ENCODE measurements at regions of chr2 and their contacts with region 1.

Region 1: DNA sequence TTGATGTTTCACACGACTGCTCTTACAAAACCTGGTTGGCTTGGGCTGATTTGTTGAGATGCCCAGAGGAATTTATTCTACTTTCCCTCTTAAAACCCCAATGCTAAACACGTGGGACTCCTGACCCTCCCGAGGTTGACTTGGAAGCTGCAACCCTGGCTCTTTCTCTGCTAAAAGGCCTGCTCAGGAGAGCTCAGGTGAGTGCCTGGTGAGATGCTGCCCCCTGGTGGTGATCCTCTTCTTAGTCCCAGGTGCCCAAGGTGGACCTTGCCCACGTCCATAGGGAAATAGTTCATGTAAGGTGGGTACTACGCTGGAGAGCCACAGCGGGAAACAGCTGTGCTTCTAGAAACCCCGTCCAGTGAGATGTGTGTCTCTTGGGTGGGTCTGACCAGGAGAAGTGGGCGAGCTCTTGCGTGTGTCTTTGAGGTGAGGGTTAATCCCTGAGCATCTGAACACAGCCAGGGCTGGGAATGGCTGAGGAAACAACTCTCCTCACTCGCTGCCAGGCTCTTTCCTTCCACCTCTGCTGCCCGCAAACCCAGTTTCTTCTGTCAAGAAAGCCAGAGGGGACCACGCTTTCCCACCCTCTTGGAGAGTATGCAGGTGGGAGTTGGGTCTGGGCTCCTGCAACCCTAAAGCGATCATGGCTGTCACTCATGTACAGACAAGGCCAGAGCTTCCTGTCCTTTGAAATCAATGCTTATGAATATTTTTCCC is 25.5 kb upstream of the PXDN start:
- DNase-seq: peak; percentile 53
- H3K4me3 ChIP-seq: no peak overlapping the region
- H3K27ac ChIP-seq: no peak overlapping the region
- H3K4me1 ChIP-seq: no peaks in the 10 kb centered on the region
- H3K27me3 ChIP-seq: no peaks in the 10 kb centered on the region
- CTCF ChIP-seq: peak; percentile 91 to 92

Region 2: GRCh38 chr2:950080-950966 is 819.5 kb before region 1 on chr2 and contains the start of gene SNTG2:
- CTCF ChIA-PET with region 1: no interaction called
- dilution Hi-C with region 1: no loop called
- in situ Hi-C with region 1: no loop called
- intact Hi-C with region 1: loop called (anchors 1 kb)
- DNase-seq: no peak
- H3K4me3 ChIP-seq: no peak within 1 kb of the TSS
- H3K27ac ChIP-seq: no peak within 1 kb of the TSS
- H3K4me1 ChIP-seq: no peaks in the 10 kb centered on the region
- H3K27me3 ChIP-seq: peaks cover 13% of the 10 kb centered on the region
- CTCF ChIP-seq: no peak
- total RNA-seq, gene SNTG2: not detected

Region 3: GRCh38 chr2:1591978-1592907 is 177.6 kb before region 1 on chr2:
- CTCF ChIA-PET with region 1: no interaction called
- dilution Hi-C with region 1: no loop called
- in situ Hi-C with region 1: no loop called
- intact Hi-C with region 1: loop called (anchors 5 kb)
- DNase-seq: peak; percentile 31
- H3K4me3 ChIP-seq: no peak overlapping the region
- H3K27ac ChIP-seq: no peak overlapping the region
- H3K4me1 ChIP-seq: peaks cover 41% of the 10 kb centered on the region
- H3K27me3 ChIP-seq: no peaks in the 10 kb centered on the region
- CTCF ChIP-seq: peak in 1 of 2 donors; percentile 23

Region 4: DNA sequence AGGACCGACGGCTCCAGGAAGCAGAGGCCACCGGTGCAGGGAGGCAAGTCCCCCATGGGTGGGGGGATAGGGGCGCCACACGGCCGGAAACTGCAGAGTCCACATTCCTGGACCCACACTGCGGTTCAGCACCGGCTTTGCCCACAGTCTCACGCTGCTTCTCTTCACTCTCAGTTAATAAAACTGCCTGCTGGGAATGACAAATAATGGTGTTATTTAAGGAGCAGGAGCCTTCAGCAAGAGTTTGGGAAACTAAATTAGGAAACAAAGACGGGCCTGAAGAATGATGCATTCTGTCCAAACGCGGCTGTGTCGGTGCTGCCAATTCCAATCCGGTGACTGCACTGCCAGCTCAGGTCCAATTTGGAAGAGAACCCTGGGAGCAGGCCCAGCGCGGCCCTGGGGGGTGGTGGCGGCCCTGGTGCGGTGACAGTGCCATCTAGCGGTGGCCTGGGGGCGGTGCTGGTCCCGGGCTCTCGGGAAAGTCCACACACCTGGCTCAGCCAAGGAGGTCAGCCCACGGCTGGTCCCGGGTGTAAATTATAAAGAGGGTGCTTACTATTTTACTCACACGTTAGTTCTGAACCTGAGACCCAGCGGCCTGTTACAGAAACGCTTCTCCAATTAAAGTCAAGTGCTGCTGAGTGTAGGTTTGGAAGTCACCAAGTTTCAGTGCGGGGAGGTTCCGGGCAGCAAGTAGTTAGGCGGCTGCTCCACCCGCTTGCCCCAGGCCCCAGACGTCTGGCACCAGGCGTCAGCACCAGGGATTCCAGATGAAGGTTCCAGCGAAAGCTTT is 47.6 kb after region 1 on chr2:
- CTCF ChIA-PET with region 1: interaction called, 3 read pairs
- dilution Hi-C with region 1: no loop called
- in situ Hi-C with region 1: no loop called
- intact Hi-C with region 1: loop called (anchors 1 kb)
- DNase-seq: peak; percentile 81
- H3K4me3 ChIP-seq: no peak overlapping the region
- H3K27ac ChIP-seq: no peak overlapping the region
- H3K4me1 ChIP-seq: peaks cover 8% of the 10 kb centered on the region
- H3K27me3 ChIP-seq: no peaks in the 10 kb centered on the region
- CTCF ChIP-seq: peak; percentile 89 to 98